Astrocyte of the cerebellum (primary cell): ENCODE measurements at regions of chr1 and their contacts with region 1.

Region 1: DNA sequence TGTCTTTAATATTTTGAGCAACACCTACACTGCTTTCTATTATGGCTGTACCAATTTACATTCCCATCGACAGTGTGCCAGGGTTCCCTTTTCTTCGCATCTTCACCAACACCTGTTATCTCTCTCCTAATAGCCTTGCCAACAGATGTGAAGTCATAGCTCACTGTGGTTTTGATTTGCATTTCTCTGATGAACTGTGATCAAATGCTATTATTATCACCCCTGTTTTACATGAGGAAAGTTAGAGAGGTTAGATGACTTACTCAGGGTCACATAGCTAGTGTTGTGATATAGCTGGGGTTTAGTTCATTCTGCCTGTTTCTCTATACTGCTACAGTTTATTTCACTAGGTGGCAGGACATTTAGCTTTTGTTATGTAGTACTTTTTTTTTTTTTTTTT is 204.1 kb downstream of the FMN2 start:
- DNase-seq: no peak
- H3K4me3 ChIP-seq: no peak overlapping the region
- CTCF ChIP-seq: no peak

Region 2: GRCh38 chr1:240199758-240200645 is 95.8 kb before region 1 on chr1:
- in situ Hi-C with region 1: loop called (anchors 5 kb)
- DNase-seq: no peak
- H3K4me3 ChIP-seq: no peak overlapping the region
- CTCF ChIP-seq: no peak

Region 3: DNA sequence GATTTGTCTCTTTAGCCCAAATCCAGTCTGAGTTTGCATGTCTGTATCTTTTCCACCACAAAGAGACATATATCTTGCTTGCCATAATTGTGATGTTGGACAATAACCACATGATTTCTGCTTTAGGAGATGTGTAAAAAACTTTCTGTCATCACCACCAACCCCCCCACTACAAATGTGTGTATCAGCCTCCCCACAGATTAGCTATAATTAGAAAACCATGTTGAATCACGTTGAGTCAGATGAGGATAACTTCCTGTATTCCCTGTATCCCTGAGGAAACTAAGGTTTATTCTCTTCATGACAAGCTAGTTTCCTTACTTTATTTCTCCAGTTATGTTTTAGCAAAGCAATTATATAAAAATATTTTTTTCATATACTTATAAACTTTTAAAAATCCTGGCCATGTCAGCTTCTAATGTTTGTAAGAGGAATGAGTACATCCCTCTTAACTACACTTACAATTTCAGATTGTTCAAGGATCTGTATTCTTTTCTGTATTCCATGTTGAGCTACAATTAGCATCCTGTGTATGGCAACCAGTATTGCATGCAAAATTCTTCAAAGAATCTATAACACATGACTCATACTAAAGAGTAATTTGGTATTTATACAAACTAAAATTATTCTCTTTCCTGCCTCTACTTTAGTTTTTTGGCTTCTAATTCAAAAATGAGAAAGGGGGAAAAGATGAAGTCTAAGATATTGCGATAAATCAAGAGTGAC is 61.2 kb before region 1 on chr1:
- in situ Hi-C with region 1: no loop called
- DNase-seq: no peak
- H3K4me3 ChIP-seq: no peak overlapping the region
- CTCF ChIP-seq: no peak